ENCODE measurements at regions of chr17 and their contacts with region 1.

Region 1: GRCh38 chr17:16589097-16589969 is 20.3 kb upstream of the ZNF287 start:
- DNase-seq: peak; percentile 93
- ATAC-seq: peak; percentile 92
- H3K4me3 Mint-ChIP-seq: peak overlapping the region; percentile 69
- H3K27ac Mint-ChIP-seq: no peak overlapping the region
- H3K4me1 Mint-ChIP-seq: peaks cover 14% of the 10 kb centered on the region
- H3K27me3 Mint-ChIP-seq: peaks cover 43% of the 10 kb centered on the region

Region 2: GRCh38 chr17:16537130-16537458 is 52.2 kb before region 1 on chr17:
- CTCF ChIA-PET with region 1: interaction called, 48 read pairs
- POLR2A ChIA-PET with region 1: interaction called, 6 read pairs
- DNase-seq: no peak
- ATAC-seq: no peak
- H3K4me3 Mint-ChIP-seq: peak overlapping the region; percentile 95
- H3K27ac Mint-ChIP-seq: peak overlapping the region; percentile 99
- H3K4me1 Mint-ChIP-seq: peaks cover 30% of the 10 kb centered on the region
- H3K27me3 Mint-ChIP-seq: no peaks in the 10 kb centered on the region

Region 3: DNA sequence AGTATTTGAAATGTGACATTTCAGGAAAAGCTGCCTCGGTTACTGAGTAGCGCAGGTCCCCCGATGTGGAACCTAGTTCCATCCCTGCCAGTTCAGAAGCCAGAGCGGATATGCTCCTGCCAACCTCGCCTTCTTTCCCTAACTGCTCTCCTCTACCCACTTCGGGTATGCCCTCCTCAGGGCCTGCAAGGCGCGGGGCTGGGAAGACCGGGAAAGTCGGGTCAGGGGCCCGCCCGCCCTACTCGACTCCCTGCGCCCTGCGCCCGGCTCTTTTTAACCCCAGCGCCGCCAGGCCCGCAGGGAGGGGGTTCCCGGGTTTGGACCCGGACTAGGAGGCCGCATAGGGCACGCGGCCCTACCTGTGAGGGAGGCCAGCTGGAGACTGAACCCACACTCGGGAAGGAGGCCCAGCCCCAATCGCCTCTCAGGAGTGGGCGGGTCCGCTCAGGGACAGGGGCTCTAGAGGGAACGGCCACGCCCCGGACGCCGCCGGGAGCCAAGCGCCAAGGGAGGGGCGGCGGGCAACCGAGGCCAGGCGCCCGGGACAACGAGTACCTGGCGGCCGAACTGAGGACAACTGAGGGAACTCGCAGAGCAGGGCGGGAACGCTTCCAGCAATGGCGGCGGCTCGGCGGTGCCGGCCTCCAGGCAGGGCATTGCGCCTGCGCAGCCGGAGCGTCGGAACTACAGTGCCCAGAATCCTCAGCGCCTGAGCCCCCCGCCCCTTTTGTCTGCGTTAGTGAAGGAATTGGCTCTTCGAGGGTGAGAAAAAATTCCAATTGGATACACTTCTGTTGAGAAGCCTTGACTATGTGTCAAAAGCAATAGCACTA is 64.1 kb after region 1 on chr17 and contains the start of gene ZNF624:
- CTCF ChIA-PET with region 1: interaction called, 13 read pairs
- POLR2A ChIA-PET with region 1: no interaction called
- DNase-seq: peak; percentile 89
- ATAC-seq: peak; percentile 96
- H3K4me3 Mint-ChIP-seq: peak within 1 kb of the TSS; percentile 81
- H3K27ac Mint-ChIP-seq: peak within 1 kb of the TSS; percentile 56
- H3K4me1 Mint-ChIP-seq: peaks cover 12% of the 10 kb centered on the region
- H3K27me3 Mint-ChIP-seq: peaks cover 11% of the 10 kb centered on the region
- total RNA-seq, gene ZNF624: 4.1 to 4.5 TPM

Measured in activated CD8-positive, alpha-beta T cell treated with anti-CD3 and anti-CD28 coated beads, Interleukin-2, amount 10 ng/mL, durations not matched to agents 7 days and 5 days (primary cell).